K562 (cell line): ENCODE measurements at regions of chr9 and their contacts with region 1.

Region 1: DNA sequence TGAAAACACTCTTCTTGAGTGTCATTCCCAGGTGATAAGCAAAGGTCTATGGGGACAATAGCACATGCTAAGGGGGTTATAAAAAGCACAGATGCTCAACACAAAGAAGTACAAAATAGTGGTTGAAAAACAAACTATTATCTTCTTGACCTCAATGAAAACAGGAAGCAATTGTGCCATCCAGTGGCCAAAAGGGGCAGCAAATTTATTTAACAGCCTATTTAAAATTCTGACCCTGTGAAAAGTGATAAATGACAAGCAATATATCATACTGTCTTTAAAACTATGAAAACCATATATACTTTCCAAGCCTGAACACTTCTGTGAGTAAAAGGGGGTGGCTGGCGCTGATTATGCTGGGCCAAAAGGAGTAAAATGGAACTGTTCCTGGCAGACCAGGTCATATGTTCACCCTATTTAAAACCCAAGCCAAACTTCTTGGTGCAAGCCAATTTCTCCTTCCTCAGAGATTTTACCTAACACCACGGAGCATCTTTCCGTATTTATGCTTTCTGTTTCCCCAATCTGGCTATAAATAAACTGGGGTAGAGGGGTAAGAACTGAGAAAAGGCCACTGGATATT is 29.7 kb downstream of the TEX10 start:
- DNase-seq: peak; percentile 19 to 57 (median 25)
- ATAC-seq: peak; percentile 72
- H3K4me3 ChIP-seq: no peak overlapping the region
- H3K27ac ChIP-seq: no peak overlapping the region
- H3K4me1 ChIP-seq: no peaks in the 10 kb centered on the region
- H3K27me3 ChIP-seq: no peaks in the 10 kb centered on the region
- CTCF ChIP-seq: peak; percentile 47 to 76 (median 67); a peak in 5 of 6 replicates
- EP300 ChIP-seq: no peak
- POLR2A ChIP-seq: no peak
- RAD21 ChIP-seq: peak; percentile 25 to 61

Region 2: GRCh38 chr9:100150214-100150613 is 172.8 kb before region 1 on chr9:
- CTCF ChIA-PET with region 1: no interaction called
- POLR2A ChIA-PET with region 1: no interaction called
- in situ Hi-C with region 1: loop called (anchors 10 kb)
- intact Hi-C with region 1: no loop called
- DNase-seq: no peak
- ATAC-seq: no peak
- H3K4me3 ChIP-seq: no peak overlapping the region
- H3K27ac ChIP-seq: no peak overlapping the region
- H3K4me1 ChIP-seq: peaks cover 0 to 11% of the 10 kb centered on the region in 2 experiments; a peak in 3 of 5 replicates
- H3K27me3 ChIP-seq: no peaks in the 10 kb centered on the region
- CTCF ChIP-seq: no peak
- EP300 ChIP-seq: no peak
- POLR2A ChIP-seq: no peak
- RAD21 ChIP-seq: no peak

Region 3: DNA sequence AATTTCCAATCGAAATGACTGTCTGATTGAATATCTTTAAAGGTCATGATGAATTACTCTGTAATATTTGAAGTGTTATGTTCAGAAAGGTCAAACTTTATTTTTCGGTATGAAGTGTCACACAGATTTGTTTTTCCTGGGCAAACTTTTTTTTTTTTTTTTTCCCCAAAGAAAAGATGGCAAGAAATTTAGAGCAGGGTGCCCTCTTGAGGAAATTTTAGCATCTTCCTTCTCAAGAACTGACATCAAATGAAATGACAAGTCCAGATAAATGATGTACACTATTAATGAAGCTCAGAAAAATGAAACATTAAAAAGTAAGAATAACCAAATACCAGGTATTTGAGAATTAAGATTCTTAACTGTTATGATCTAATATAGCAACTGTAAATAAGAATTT is 100.4 kb before region 1 on chr9:
- CTCF ChIA-PET with region 1: no interaction called
- POLR2A ChIA-PET with region 1: no interaction called
- in situ Hi-C with region 1: no loop called
- intact Hi-C with region 1: loop called (anchors 5 kb)
- DNase-seq: peak in 2 of 4 experiments; percentile 12 to 28
- ATAC-seq: no peak
- H3K4me3 ChIP-seq: no peak overlapping the region
- H3K27ac ChIP-seq: no peak overlapping the region
- H3K4me1 ChIP-seq: 0 out of 5 replicates have a peak, but pooled peaks cover 0 to 3% of the 10 kb centered on the region in 2 experiments
- H3K27me3 ChIP-seq: no peaks in the 10 kb centered on the region
- CTCF ChIP-seq: peak in 2 of 3 experiments; percentile 13 to 52; a peak in 3 of 6 replicates
- EP300 ChIP-seq: no peak
- POLR2A ChIP-seq: no peak
- RAD21 ChIP-seq: peak; percentile 22 to 48

Region 4: DNA sequence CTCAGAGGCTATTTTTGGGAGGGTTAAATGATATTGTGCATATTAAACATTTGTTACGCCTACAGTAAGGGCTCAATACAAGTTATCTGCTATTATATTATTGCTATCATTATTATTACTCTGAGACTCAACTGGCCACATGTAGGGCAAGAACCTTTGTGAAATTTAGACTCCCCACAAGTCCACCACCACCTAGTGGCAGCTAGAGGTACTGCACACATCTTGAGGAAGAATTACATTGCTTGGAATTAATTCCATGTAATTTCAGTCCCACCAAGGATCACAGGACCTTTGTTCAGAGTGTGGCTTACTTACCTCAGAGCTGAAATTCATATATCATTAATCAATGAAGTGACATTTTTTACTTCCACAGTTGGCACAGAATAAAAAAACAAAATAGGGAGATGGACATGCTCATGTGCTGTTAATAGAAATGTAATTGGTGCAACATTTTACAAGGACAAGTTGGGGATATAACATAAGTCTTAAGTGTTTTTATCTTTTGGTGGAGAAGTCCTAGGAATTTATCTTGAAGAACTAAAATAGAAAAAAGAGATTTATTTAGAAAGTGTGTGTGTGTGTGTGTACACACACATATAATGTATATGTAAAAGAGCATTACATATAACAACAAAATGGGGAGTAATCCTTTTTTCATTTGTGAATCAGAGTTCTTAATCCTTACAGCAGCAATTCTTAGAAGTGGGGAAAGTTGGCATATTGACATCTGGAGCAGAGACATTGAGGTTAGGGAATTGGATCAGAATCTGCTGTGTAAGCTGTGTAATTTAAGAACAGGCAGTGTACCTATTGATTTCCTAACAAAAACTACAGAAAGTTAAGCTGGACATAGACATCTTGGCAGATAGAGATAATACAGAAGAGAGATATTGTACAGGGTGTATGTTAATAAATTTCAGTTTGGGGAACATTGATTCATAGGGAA is 115.1 kb after region 1 on chr9:
- CTCF ChIA-PET with region 1: no interaction called
- POLR2A ChIA-PET with region 1: interaction called, 3 read pairs
- in situ Hi-C with region 1: no loop called
- intact Hi-C with region 1: loop called (anchors 5 kb)
- DNase-seq: peak; percentile 57 to 85 (median 62)
- ATAC-seq: peak; percentile 77
- H3K4me3 ChIP-seq: no peak overlapping the region
- H3K27ac ChIP-seq: no peak overlapping the region
- H3K4me1 ChIP-seq: peaks cover 0 to 21% of the 10 kb centered on the region in 2 experiments; a peak in 3 of 5 replicates
- H3K27me3 ChIP-seq: no peaks in the 10 kb centered on the region
- CTCF ChIP-seq: peak; percentile 80 to 87 (median 83)
- EP300 ChIP-seq: no peak
- POLR2A ChIP-seq: no peak
- RAD21 ChIP-seq: peak; percentile 59 to 72